Mammary epithelial cell (primary cell): ENCODE measurements at regions of chr15 and their contacts with region 1.

Region 1: GRCh38 chr15:65980824-65981456 is 111.6 kb downstream of the RAB11A start:
- DNase-seq: peak; percentile 64
- H3K4me3 ChIP-seq: no peak overlapping the region
- H3K27ac ChIP-seq: no peak overlapping the region
- H3K4me1 ChIP-seq: peaks cover 23% of the 10 kb centered on the region
- H3K27me3 ChIP-seq: peaks cover 9% of the 10 kb centered on the region
- CTCF ChIP-seq: peak; percentile 94 to 95

Region 2: GRCh38 chr15:65916664-65917406 is 64.1 kb before region 1 on chr15:
- CTCF ChIA-PET with region 1: no interaction called
- dilution Hi-C with region 1: no loop called
- in situ Hi-C with region 1: no loop called
- intact Hi-C with region 1: loop called (anchors 2 kb)
- DNase-seq: peak; percentile 27
- H3K4me3 ChIP-seq: no peak overlapping the region
- H3K27ac ChIP-seq: no peak overlapping the region
- H3K4me1 ChIP-seq: no peaks in the 10 kb centered on the region
- H3K27me3 ChIP-seq: no peaks in the 10 kb centered on the region
- CTCF ChIP-seq: peak; percentile 66 to 74

Region 3: GRCh38 chr15:65939901-65940617 is 40.9 kb before region 1 on chr15:
- CTCF ChIA-PET with region 1: no interaction called
- dilution Hi-C with region 1: no loop called
- in situ Hi-C with region 1: no loop called
- intact Hi-C with region 1: no loop called
- DNase-seq: peak; percentile 85
- H3K4me3 ChIP-seq: no peak overlapping the region
- H3K27ac ChIP-seq: no peak overlapping the region
- H3K4me1 ChIP-seq: peaks cover 17% of the 10 kb centered on the region
- H3K27me3 ChIP-seq: no peaks in the 10 kb centered on the region
- CTCF ChIP-seq: no peak

Region 4: DNA sequence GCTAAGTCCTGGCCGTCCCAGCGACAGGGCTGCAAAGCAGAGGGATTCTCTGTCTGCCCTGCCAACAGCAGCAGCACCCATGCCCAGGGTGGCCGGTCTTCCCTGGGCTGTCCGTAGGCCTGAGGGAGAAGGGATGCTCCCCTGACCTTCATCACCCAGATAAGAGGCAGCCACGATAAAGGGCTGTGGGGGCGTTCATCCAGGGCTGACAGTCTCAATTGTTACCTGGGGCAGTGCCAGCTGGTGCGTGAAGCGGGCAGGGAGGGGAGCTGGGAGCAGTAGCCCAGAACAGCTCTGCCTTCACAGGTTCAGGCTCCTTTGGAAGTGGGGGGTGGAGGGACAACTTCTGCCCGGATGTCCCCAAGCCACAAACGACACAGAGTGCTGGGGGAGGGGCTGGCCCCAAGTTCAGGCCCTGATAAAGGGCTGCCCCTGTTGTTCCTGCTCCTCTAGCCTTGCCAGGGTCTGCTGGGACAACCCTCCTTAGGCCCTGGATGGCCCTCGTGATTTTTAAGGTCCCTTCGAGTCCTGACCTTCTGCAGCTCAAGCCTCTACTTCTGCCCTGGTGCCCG is 16.9 kb before region 1 on chr15:
- CTCF ChIA-PET with region 1: no interaction called
- dilution Hi-C with region 1: no loop called
- in situ Hi-C with region 1: no loop called
- intact Hi-C with region 1: no loop called
- DNase-seq: no peak
- H3K4me3 ChIP-seq: no peak overlapping the region
- H3K27ac ChIP-seq: no peak overlapping the region
- H3K4me1 ChIP-seq: peaks cover 7% of the 10 kb centered on the region
- H3K27me3 ChIP-seq: peaks cover 1% of the 10 kb centered on the region
- CTCF ChIP-seq: no peak

Region 5: GRCh38 chr15:66046751-66047150 is 65.8 kb after region 1 on chr15:
- CTCF ChIA-PET with region 1: no interaction called
- dilution Hi-C with region 1: no loop called
- in situ Hi-C with region 1: no loop called
- intact Hi-C with region 1: loop called (anchors 5 kb)
- DNase-seq: no peak
- H3K4me3 ChIP-seq: no peak overlapping the region
- H3K27ac ChIP-seq: no peak overlapping the region
- H3K4me1 ChIP-seq: no peaks in the 10 kb centered on the region
- H3K27me3 ChIP-seq: no peaks in the 10 kb centered on the region
- CTCF ChIP-seq: peak in 1 of 2 donors; percentile 16

Region 6: DNA sequence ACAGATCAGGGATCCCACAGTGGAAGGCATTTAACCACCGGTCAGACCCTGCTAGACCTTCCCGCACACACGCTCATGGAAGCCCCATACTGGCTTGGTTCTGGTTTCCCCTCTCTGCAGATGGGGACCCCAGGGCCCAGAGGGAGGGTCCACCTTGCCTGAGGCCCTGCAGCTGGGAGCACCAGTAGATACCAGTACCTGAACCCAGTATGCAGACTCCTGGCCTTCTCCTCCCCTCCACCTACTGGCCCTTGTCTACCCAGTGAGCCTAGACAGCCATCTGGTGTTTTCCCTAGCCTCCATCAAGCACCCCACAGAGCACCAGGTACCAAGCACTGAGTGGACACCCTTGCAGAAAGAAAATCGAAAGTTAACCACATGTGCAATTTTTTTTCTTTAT is 207.5 kb after region 1 on chr15:
- CTCF ChIA-PET with region 1: no interaction called
- dilution Hi-C with region 1: no loop called
- in situ Hi-C with region 1: no loop called
- intact Hi-C with region 1: loop called (anchors 1 kb)
- DNase-seq: no peak
- H3K4me3 ChIP-seq: no peak overlapping the region
- H3K27ac ChIP-seq: no peak overlapping the region
- H3K4me1 ChIP-seq: peaks cover 16% of the 10 kb centered on the region
- H3K27me3 ChIP-seq: no peaks in the 10 kb centered on the region
- CTCF ChIP-seq: no peak

Region 7: GRCh38 chr15:66287461-66288057 is 306.6 kb after region 1 on chr15:
- CTCF ChIA-PET with region 1: no interaction called
- dilution Hi-C with region 1: no loop called
- in situ Hi-C with region 1: loop called in 1 of 2 experiments (anchors 10 kb)
- intact Hi-C with region 1: loop called (anchors 1 kb)
- DNase-seq: peak; percentile 14
- H3K4me3 ChIP-seq: no peak overlapping the region
- H3K27ac ChIP-seq: no peak overlapping the region
- H3K4me1 ChIP-seq: peaks cover 7% of the 10 kb centered on the region
- H3K27me3 ChIP-seq: no peaks in the 10 kb centered on the region
- CTCF ChIP-seq: peak; percentile 56 to 61